ENCODE measurements at regions of chr11 and their contacts with region 1.

Region 1: DNA sequence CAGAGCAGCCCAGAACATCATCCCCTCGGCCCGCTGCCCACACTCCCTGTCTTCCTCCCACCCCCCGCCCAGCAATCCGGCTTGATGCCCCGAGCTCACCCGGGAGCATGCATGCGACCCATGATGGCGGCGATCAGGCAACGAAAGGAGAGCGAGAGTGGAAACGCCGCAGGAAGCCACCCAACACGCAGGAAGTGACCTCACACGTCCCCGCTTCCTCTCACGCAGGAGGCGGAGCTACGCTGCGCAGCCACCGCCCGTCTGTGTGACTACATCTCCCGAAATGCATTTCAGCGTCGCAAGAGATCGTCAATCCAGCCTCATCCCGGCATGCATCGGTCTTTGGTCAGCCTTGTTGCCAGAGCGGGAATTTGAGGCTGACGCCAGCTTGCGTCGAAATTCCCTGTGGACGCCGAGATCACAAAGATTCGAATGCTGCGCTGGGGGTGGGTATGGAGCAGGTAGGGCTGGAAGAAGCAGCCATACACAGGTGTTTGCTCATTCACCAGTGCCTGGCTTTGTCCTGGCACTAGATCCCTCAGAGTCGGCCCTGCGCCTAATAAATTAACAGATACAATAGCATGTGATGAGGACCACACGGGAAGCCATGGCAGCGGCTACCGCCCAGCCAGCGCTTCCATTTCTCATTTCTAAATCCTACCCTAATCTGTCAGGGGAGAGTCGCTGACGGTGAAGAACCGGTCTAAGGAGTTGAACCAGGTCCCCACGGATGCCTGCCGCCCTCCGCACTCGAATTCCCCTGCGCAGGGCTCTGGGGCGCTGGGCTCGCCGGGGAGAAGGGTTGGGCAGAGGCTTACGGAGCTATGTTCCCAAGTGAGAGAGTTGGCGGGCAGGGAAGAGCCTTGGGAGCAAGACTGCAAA is at the start of gene RPS13:
- H3K4me3 ChIP-seq: peak within 1 kb of the TSS; percentile 78
- H3K27ac ChIP-seq: peak within 1 kb of the TSS; percentile 72
- H3K4me1 ChIP-seq: 0 out of 2 replicates have a peak, but pooled peaks cover 4% of the 10 kb centered on the region
- CTCF ChIP-seq: no peak

Region 2: GRCh38 chr11:16935518-16936302 is 142.1 kb before region 1 on chr11:
- CTCF ChIA-PET with region 1: no interaction called
- POLR2A ChIA-PET with region 1: interaction called, 13 read pairs
- H3K4me3 ChIP-seq: no peak overlapping the region
- H3K27ac ChIP-seq: no peak overlapping the region
- H3K4me1 ChIP-seq: 0 out of 2 replicates have a peak, but pooled peaks cover 2% of the 10 kb centered on the region
- CTCF ChIP-seq: peak; percentile 48; the same call in 1 of the 2 replicates

Region 3: GRCh38 chr11:16945671-16946469 is 131.9 kb before region 1 on chr11:
- CTCF ChIA-PET with region 1: no interaction called
- POLR2A ChIA-PET with region 1: interaction called, 11 read pairs
- H3K4me3 ChIP-seq: no peak overlapping the region
- H3K27ac ChIP-seq: no peak overlapping the region
- H3K4me1 ChIP-seq: no peaks in the 10 kb centered on the region
- CTCF ChIP-seq: peak; percentile 76

Region 4: GRCh38 chr11:16969010-16969999 is 108.5 kb before region 1 on chr11:
- CTCF ChIA-PET with region 1: no interaction called
- POLR2A ChIA-PET with region 1: no interaction called
- H3K4me3 ChIP-seq: no peak overlapping the region
- H3K27ac ChIP-seq: no peak overlapping the region
- H3K4me1 ChIP-seq: no peaks in the 10 kb centered on the region
- CTCF ChIP-seq: no peak

Region 5: GRCh38 chr11:17207317-17208258 is 129.8 kb after region 1 on chr11 and contains the start of gene PIK3C2A:
- CTCF ChIA-PET with region 1: interaction called, 4 read pairs
- POLR2A ChIA-PET with region 1: interaction called, 23 read pairs
- H3K4me3 ChIP-seq: peak within 1 kb of the TSS; percentile 92
- H3K27ac ChIP-seq: peak within 1 kb of the TSS; percentile 84
- H3K4me1 ChIP-seq: peaks cover 4% of the 10 kb centered on the region; the same call in 1 of the 2 replicates
- CTCF ChIP-seq: no peak

Measured in HEK293 (cell line).